ENCODE measurements at regions of chr11 and their contacts with region 1.

Region 1: GRCh38 chr11:68036141-68036716 is 2.6 kb upstream of the TCIRG1 start:
- DNase-seq: no peak
- H3K4me3 ChIP-seq: no peak overlapping the region
- H3K27ac ChIP-seq: no peak overlapping the region
- H3K4me1 ChIP-seq: peaks cover 34% of the 10 kb centered on the region
- H3K27me3 ChIP-seq: no peaks in the 10 kb centered on the region
- CTCF ChIP-seq: no peak

Region 2: DNA sequence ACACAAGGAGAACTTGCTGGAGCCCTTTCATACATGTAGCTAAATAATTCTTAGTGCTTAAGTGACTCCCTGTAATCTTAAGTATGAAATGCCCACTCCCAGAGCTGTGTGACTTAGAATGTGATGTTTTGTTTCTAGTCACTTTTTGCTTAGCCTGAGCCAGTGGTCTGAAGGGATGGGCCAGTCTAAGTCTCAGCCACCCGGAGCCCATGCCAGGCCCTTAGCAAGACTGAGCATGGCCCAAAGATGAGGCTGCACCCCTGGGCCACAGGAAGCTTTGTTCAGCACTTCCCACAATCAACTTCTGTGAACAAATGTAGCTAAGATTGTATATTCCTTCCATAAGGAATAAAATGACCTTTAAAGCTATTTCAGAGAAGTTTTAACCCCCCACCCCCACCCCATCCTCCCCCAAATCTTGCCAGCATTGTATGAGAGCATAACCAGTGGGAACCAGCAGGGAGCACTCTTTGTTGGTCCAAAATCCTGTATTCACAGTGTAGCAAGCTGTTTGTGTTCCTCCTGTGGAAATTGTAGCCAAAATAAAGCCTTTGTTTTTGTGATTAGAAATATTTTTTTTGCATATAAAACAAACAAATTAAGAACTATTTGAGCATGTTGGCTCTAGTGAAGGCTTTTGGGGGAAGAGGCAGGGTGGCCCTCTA is 574.4 kb after region 1 on chr11:
- CTCF ChIA-PET with region 1: interaction called, 10 read pairs
- POLR2A ChIA-PET with region 1: no interaction called
- intact Hi-C with region 1: no loop called
- DNase-seq: no peak
- H3K4me3 ChIP-seq: no peak overlapping the region
- H3K27ac ChIP-seq: no peak overlapping the region
- H3K4me1 ChIP-seq: no peaks in the 10 kb centered on the region
- H3K27me3 ChIP-seq: no peaks in the 10 kb centered on the region
- CTCF ChIP-seq: peak; percentile 50